ENCODE measurements at regions of chr10 and their contacts with region 1.

Region 1: GRCh38 chr10:120942806-120943413 is 91.7 kb downstream of the WDR11 start:
- DNase-seq: peak; percentile 60 to 82
- ATAC-seq: peak; percentile 94

Region 2: GRCh38 chr10:120794390-120794789 is 148.5 kb before region 1 on chr10:
- intact Hi-C with region 1: no loop called
- DNase-seq: no peak
- ATAC-seq: no peak

Region 3: GRCh38 chr10:121070275-121071065 is 127.6 kb after region 1 on chr10:
- intact Hi-C with region 1: no loop called
- DNase-seq: peak in 1 of 2 donors; percentile 19
- ATAC-seq: peak; percentile 94

Region 4: GRCh38 chr10:121734589-121735045 is 791.7 kb after region 1 on chr10:
- intact Hi-C with region 1: loop called (anchors 5 kb)
- DNase-seq: peak in 1 of 2 donors; percentile 32
- ATAC-seq: peak; percentile 26

Region 5: DNA sequence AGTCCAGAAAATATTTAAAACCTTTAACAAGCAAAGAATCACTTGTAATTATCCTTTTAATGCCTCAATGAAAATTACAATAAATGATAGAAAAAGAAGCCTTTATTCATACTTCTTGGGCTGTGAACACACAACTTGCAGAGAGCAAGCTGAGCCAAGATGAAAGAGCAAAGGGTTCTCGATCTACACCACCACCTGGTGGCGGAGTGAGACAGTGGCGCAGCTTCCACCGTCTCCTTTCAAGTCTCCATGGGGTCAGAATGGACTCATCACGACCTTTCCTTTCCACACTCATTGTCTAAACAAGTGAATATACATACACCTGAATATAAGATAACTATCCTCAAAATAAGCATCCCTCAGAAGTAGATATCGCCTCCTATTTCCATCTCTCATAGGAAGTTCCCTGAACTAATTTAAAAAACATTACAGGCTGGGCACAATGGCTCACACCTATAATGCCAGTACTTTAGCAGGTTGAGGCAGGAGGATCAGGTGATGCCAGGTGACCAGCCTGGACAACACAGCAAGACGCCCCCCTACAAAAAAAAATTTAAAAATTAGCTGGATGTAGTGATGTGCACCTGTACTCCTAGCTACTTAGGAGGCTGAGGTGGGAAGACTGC is 944.2 kb after region 1 on chr10:
- intact Hi-C with region 1: loop called in 1 of 2 experiments (anchors 5 kb)
- DNase-seq: peak in 1 of 2 donors; percentile 63
- ATAC-seq: peak; percentile 93

Measured in left colon (tissue), 2 donors.